Activated CD8-positive, alpha-beta T cell treated with anti-CD3 and anti-CD28 coated beads for 36 hours (primary cell): ENCODE measurements at regions of chr2 and their contacts with region 1.

Region 1: GRCh38 chr2:69716555-69717114 is 25.3 kb upstream of the ANXA4 start:
- DNase-seq: no peak
- ATAC-seq: no peak
- H3K4me3 Mint-ChIP-seq: no peak overlapping the region
- H3K27ac Mint-ChIP-seq: no peak overlapping the region
- H3K4me1 Mint-ChIP-seq: peaks cover 13% of the 10 kb centered on the region
- H3K27me3 Mint-ChIP-seq: no peaks in the 10 kb centered on the region
- CTCF ChIP-seq: no peak

Region 2: DNA sequence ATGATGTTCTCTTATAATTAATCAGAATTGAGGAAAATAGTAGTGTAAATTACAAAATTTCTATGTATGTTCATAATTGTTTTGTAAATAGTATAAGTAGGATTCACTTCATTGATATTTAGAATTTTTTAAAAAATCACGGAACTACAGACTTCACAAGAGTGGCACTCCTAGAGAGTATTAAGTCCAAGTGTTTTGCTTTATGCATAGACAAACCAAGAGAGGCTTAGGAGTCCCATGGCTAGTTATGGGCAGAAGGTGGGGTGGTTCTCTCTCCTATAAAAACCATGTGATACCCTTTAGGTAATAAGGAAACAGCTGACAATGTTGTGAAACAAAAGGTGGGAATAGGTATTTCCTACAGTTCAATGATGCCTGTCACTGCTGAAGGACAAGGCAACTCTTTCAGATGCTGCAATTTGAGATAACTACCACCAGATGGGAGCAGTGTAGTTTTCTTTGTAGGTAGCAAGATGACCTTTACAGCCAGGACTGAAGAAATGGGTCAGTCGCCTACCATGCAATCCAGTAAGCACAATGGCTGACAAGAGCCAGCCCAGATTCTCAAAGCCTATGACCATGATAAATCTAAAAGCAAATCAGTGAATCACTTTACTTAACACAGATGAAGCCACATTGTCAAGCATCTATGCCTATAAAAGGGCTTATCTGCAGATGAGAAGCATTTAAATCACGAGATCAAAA is 157.0 kb before region 1 on chr2:
- CTCF ChIA-PET with region 1: interaction called, 76 read pairs
- POLR2A ChIA-PET with region 1: interaction called, 3 read pairs
- intact Hi-C with region 1: loop called (anchors 2 kb)
- DNase-seq: peak; percentile 33
- ATAC-seq: peak; percentile 84
- H3K4me3 Mint-ChIP-seq: no peak overlapping the region
- H3K27ac Mint-ChIP-seq: peak overlapping the region; percentile 67
- H3K4me1 Mint-ChIP-seq: peaks cover 75% of the 10 kb centered on the region
- H3K27me3 Mint-ChIP-seq: no peaks in the 10 kb centered on the region
- CTCF ChIP-seq: peak; percentile 72

Region 3: DNA sequence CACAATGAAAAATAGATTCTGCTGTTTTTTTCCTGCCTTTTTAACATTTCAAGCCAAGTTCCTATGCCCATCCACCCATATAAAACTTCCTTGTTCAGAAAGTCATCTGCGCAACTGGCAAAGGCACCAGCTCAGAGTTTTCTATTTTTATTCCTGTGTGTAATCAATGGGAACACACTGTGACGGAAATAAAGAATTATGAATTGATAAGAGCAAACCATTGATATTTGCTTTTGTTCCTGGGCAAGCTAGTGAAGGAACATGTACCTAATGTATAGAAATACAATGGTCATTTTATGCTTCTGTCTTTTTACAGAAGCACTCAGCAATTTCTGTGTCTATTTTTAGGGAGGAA is 42.3 kb before region 1 on chr2:
- CTCF ChIA-PET with region 1: no interaction called
- POLR2A ChIA-PET with region 1: no interaction called
- intact Hi-C with region 1: no loop called
- DNase-seq: no peak
- ATAC-seq: no peak
- H3K4me3 Mint-ChIP-seq: no peak overlapping the region
- H3K27ac Mint-ChIP-seq: no peak overlapping the region
- H3K4me1 Mint-ChIP-seq: peaks cover 25% of the 10 kb centered on the region
- H3K27me3 Mint-ChIP-seq: no peaks in the 10 kb centered on the region
- CTCF ChIP-seq: no peak

Region 4: DNA sequence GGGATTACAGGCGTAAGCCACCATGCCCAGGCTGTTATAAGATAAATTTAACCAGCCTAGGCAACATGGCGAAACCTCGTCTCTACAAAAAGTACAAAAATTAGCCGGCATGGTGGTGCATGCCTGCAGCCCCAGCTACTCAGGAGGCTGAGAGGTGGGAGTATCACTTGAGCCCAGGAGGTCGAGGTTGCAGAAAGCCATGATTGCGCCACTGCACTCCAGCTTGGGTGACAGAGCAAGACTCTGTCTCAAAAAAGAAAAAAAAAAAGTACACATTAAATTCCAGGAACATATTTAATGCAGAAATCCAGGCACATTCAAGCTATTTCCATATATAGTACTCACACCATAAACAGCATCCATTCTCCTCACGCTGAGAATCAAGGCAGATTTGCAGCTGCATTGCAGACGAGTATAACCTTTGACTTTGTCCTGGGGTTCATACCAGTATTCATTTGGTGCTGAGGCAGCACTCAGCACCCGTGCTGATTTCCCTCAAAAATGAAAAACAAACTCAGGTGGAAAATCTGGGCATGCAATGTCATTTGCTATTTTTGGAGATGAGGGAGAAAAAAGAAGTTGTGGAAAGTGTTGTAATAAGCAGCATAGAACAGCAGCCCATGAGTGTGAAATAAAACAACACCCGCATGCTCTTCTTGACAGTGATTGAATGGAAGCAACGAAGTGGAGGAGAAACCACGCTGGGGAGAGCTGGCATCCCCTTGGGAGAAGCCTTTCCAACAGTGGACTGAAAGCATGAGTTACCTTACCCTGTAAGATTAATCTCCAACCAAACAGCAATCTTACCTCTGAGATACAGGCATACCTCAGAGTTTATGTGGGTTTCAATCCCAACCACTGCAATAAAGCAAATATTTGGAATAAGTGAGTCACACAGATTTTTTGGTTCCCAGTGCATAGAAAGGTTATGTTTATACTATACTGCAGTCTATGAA is 21.5 kb before region 1 on chr2:
- CTCF ChIA-PET with region 1: interaction called, 22 read pairs
- POLR2A ChIA-PET with region 1: no interaction called
- intact Hi-C with region 1: no loop called
- DNase-seq: no peak
- ATAC-seq: peak; percentile 71
- H3K4me3 Mint-ChIP-seq: no peak overlapping the region
- H3K27ac Mint-ChIP-seq: peak overlapping the region; percentile 72
- H3K4me1 Mint-ChIP-seq: peaks cover 75% of the 10 kb centered on the region
- H3K27me3 Mint-ChIP-seq: no peaks in the 10 kb centered on the region
- CTCF ChIP-seq: no peak

Region 5: DNA sequence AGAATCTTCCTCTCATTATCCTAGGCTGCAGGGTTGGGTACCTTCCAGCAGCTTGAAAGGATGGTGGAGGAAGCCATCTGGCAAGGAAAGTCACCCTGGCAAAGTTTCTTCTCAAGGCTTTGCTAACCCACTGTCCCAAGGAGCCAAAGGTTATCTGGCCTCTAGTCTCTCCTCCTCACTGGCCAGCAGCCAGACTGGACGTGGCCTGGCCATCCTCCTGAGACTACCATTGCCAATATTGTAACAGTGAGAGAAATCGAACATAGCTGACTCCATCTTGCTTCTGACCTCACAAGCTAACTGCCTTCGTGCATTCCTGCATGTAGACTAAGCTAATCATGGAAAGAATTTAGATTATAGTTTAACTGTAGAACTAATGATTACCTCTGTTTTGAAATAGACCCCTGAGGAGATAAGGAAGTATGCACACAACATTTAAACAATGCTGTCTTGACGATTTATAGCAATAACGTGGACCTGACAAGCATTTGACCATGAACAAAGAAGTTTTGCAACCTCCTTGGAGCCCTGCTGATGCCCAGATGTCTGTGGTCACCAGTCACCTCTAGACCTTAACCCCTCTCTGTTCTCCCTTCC is 17.5 kb after region 1 on chr2:
- CTCF ChIA-PET with region 1: no interaction called
- POLR2A ChIA-PET with region 1: no interaction called
- intact Hi-C with region 1: no loop called
- DNase-seq: no peak
- ATAC-seq: no peak
- H3K4me3 Mint-ChIP-seq: no peak overlapping the region
- H3K27ac Mint-ChIP-seq: no peak overlapping the region
- H3K4me1 Mint-ChIP-seq: no peaks in the 10 kb centered on the region
- H3K27me3 Mint-ChIP-seq: no peaks in the 10 kb centered on the region
- CTCF ChIP-seq: no peak